Right ventricle myocardium inferior (tissue), 1 donor: ENCODE measurements at regions of chr18 and their contacts with region 1.

Region 1: GRCh38 chr18:7789856-7790552 is 222.9 kb downstream of the PTPRM start:
- DNase-seq: no peak
- ATAC-seq: no peak

Region 2: DNA sequence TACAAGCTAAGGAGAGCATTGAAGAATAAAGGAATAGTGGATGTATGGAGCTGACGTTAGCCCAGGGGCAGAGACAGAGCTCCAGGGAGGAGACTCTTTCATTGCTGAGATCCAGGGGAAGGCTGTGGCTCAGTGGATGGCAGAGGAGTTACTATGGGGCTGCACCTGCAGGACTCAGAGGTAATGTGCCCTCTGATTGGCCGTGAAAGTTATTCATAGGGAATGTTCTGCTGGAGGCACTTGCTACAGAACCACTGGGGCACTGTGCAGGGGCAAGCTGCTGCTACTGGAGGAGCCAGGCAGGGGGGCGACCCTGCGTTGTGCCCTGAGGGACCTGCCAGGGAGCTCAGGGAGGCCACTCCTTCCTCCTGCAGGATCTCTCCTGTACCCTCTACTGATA is 23.7 kb before region 1 on chr18:
- intact Hi-C with region 1: no loop called
- DNase-seq: no peak
- ATAC-seq: peak; percentile 29

Region 3: DNA sequence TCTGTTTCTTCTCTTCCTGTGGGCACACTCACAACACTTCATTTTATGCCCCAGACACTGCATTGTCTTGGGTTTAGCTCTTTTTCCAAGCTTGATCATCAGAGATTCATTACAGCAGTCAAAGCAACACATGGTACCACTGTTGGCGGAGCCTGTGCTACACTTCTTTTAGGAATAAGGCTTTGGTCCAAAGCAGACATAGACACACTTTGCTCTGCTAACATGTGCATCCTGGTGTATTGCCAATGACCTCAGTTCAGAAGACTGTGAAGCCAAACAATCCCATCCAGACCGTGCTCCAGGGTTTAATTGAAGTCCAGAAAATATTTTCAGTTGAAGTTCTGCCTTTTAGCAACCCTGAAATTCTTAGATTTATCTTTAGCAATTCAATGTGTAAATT is 464.6 kb after region 1 on chr18:
- intact Hi-C with region 1: loop called (anchors 10 kb)
- DNase-seq: no peak
- ATAC-seq: peak; percentile 79